Right ventricle myocardium inferior (tissue), 1 donor: ENCODE measurements at regions of chr3 and their contacts with region 1.

Region 1: DNA sequence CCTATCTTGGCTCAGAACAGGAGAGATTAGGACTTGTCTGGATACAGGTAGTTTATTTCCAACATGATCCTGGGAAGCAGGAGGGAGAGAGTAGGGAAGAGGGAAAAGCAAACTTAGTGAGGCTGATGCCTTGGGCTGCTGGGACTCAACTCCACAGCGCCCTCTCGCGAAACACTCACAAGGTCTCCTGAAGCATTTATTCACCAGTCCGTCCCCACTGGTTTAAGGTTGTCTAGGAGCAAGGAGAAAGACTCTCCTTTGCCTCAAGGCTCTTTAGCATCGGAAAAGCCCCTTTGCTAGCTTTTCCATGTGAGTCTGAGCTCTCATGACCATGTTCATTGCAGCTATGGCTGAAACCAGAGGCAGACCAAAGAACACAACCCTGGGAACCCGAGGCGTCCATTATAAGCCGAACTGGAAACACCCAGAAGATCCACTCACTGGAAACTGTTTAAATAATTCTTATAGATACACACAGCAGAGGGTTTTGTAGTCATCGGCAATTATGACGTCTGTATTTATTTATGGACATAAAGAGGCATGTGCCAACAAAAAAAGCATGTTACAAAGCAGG is 244.5 kb downstream of the CD47 start:
- DNase-seq: peak; percentile 72
- ATAC-seq: peak; percentile 72

Region 2: GRCh38 chr3:107660306-107660976 is 185.9 kb before region 1 on chr3:
- intact Hi-C with region 1: loop called (anchors 10 kb)
- DNase-seq: no peak
- ATAC-seq: no peak

Region 3: GRCh38 chr3:107861904-107862303 is 15.5 kb after region 1 on chr3:
- intact Hi-C with region 1: no loop called
- DNase-seq: no peak
- ATAC-seq: no peak

Region 4: DNA sequence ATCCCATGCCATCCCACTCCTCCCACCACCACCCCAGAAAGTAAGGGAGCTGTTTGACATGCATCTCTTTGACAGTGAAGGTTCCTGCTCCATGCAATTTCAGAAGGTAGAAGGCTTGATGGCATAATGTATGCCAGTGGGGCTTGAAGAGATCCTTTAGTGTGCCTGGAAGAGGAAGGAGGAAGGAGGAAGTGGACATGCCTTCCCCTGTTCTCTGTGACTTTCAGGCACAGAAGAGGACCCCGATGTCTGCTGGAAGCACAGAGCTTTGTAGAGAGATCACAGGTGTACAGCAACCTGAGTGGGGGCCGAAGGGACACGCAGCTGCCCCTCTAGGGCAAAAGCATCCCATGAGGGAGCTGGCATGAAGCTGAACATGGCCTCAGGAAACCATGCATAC is 72.9 kb after region 1 on chr3:
- intact Hi-C with region 1: no loop called
- DNase-seq: no peak
- ATAC-seq: no peak